PC-9 (cell line): ENCODE measurements at regions of chr6 and their contacts with region 1.

Region 1: DNA sequence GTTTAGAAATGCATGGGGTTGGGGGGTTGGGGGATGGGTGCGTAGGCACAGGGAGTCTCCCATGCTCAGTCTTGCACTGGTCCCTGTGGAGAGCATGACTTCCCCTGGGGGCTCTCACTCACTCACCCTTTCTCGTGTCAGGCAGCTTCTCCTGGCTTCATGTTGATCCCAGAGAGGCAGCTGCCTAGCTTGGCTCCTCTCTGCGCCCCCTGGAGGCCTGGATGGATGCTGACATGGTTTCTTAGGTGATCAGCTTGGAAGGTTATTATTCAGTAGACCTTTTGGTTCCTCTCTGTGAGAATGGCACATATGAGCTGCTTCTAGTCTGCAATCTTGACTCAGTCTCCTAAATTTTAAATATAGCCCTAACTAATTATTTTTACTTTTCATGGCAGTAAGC is 109.3 kb upstream of the FAM83B start:
- DNase-seq: no peak
- H3K4me3 ChIP-seq: no peak overlapping the region
- H3K27ac ChIP-seq: no peak overlapping the region
- H3K4me1 ChIP-seq: no peaks in the 10 kb centered on the region
- H3K27me3 ChIP-seq: no peaks in the 10 kb centered on the region
- CTCF ChIP-seq: peak; percentile 52; the same call in 1 of the 2 replicates

Region 2: GRCh38 chr6:54621285-54621684 is 116.0 kb before region 1 on chr6:
- CTCF ChIA-PET with region 1: no interaction called
- POLR2A ChIA-PET with region 1: interaction called, 30 read pairs
- intact Hi-C with region 1: no loop called
- DNase-seq: peak in 1 of 2 experiments; percentile 7
- H3K4me3 ChIP-seq: no peak overlapping the region
- H3K27ac ChIP-seq: no peak overlapping the region
- H3K4me1 ChIP-seq: no peaks in the 10 kb centered on the region
- H3K27me3 ChIP-seq: no peaks in the 10 kb centered on the region
- CTCF ChIP-seq: peak; percentile 73

Region 3: GRCh38 chr6:54784011-54784410 is 46.8 kb after region 1 on chr6:
- CTCF ChIA-PET with region 1: no interaction called
- POLR2A ChIA-PET with region 1: no interaction called
- intact Hi-C with region 1: no loop called
- DNase-seq: no peak
- H3K4me3 ChIP-seq: no peak overlapping the region
- H3K27ac ChIP-seq: no peak overlapping the region
- H3K4me1 ChIP-seq: no peaks in the 10 kb centered on the region
- H3K27me3 ChIP-seq: no peaks in the 10 kb centered on the region
- CTCF ChIP-seq: no peak